WTC11 (cell line): ENCODE measurements at regions of chr17 and their contacts with region 1.

Region 1: GRCh38 chr17:43701318-43701743 is 39.6 kb upstream of the MEOX1 start:
- DNase-seq: no peak
- ATAC-seq: no peak
- H3K4me3 Mint-ChIP-seq: no peak overlapping the region
- H3K27ac Mint-ChIP-seq: no peak overlapping the region
- H3K4me1 Mint-ChIP-seq: peaks cover 14% of the 10 kb centered on the region
- H3K27me3 Mint-ChIP-seq: 0 out of 2 replicates have a peak, but pooled peaks cover 2% of the 10 kb centered on the region
- CTCF ChIP-seq: no peak

Region 2: DNA sequence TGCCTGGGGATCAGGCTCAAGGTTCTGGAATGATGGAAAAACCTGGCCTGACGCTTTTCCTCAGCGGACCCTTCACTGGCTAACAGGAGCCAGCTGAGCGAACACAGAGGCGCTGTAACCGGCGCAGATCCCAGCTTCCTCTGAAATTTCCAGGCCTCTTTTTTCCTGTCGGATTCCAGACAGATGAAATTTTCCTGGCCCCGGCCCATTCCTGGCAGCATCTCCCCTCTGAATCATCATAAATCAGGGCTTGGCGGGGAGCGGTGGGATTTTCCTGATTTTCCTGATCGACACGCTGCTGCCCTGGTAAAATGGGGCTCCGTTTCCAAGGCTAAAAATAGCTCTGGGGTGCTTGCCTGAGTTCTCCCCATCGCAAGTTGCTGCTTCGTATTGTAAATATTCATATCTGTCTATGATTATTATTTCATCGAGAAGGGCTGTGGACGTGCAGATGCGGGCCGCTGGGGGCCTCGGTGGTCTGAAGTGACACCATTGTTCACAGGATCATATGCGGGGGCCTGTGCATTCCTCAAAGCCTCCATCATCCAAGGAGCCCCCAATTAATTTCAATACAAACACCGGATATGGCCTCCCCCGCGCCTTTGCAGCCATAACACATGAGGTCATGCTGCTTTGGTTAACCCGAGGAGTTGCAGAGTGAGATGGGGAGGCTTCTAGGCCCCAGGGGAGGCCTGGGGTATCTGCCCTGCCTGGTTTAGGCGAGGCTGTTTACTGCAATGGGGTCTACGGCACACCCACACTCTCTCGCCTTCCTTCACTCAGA is 109.4 kb before region 1 on chr17:
- CTCF ChIA-PET with region 1: no interaction called
- POLR2A ChIA-PET with region 1: no interaction called
- DNase-seq: no peak
- ATAC-seq: peak; percentile 43
- H3K4me3 Mint-ChIP-seq: no peak overlapping the region
- H3K27ac Mint-ChIP-seq: no peak overlapping the region
- H3K4me1 Mint-ChIP-seq: peaks cover 22% of the 10 kb centered on the region
- H3K27me3 Mint-ChIP-seq: peaks cover 7% of the 10 kb centered on the region; the same call in 1 of the 2 replicates
- CTCF ChIP-seq: no peak

Region 3: GRCh38 chr17:43713494-43714162 is 12.3 kb after region 1 on chr17:
- CTCF ChIA-PET with region 1: interaction called, 22 read pairs
- POLR2A ChIA-PET with region 1: interaction called, 4 read pairs
- DNase-seq: peak; percentile 52
- ATAC-seq: peak; percentile 78
- H3K4me3 Mint-ChIP-seq: peak overlapping the region; percentile 66
- H3K27ac Mint-ChIP-seq: no peak overlapping the region
- H3K4me1 Mint-ChIP-seq: peaks cover 20% of the 10 kb centered on the region
- H3K27me3 Mint-ChIP-seq: peaks cover 65% of the 10 kb centered on the region
- CTCF ChIP-seq: no peak